K562 (cell line): ENCODE measurements at regions of chr16 and their contacts with region 1.

Region 1: GRCh38 chr16:48353565-48354163 is 31.5 kb downstream of the SIAH1 start:
- DNase-seq: peak; percentile 74 to 83 (median 78)
- ATAC-seq: peak; percentile 94
- H3K4me3 ChIP-seq: no peak overlapping the region
- H3K27ac ChIP-seq: no peak overlapping the region
- H3K4me1 ChIP-seq: no peaks in the 10 kb centered on the region; a peak in 1 of 5 replicates
- H3K27me3 ChIP-seq: no peaks in the 10 kb centered on the region
- CTCF ChIP-seq: peak; percentile 94 to 99 (median 99)
- EP300 ChIP-seq: no peak
- POLR2A ChIP-seq: no peak
- RAD21 ChIP-seq: peak; percentile 81 to 88

Region 2: DNA sequence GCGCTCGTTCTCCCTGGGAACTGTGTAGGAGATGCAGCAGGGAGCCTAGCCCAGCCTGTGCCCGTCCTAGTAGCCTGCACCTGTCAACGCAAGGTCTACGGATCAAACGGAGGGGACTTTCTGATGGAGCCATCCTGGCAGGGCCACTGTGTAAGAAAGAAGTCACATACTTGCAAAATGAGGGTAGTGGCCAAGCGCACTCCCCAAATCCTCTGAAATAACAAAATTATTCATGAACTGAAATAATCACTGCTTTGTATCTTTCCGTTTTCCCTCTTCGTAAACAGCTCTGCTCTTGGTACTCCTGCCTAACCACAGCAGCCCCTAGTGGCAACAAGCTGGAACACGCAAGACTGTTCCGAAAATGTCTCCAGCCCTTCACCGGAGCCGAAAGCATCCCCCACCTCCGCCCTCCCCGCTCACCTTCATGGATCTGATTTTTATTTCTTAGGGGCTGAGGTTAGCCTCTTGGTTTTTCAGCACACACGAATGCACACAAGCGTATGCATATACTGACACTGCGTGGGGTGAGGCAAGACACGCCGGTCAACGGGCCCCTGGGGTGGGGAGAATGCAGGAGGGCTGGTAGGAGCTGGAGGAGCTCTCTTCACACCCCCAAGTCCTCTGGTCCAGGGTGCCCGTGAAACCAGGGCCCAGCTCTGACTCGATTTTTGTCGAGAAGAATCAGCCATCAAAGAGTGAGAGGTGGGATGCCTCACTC is 298.6 kb before region 1 on chr16:
- CTCF ChIA-PET with region 1: no interaction called
- POLR2A ChIA-PET with region 1: no interaction called
- in situ Hi-C with region 1: no loop called
- intact Hi-C with region 1: no loop called
- DNase-seq: peak; percentile 25 to 46 (median 40)
- ATAC-seq: peak; percentile 93
- H3K4me3 ChIP-seq: no peak overlapping the region
- H3K27ac ChIP-seq: no peak overlapping the region
- H3K4me1 ChIP-seq: no peaks in the 10 kb centered on the region; a peak in 1 of 5 replicates
- H3K27me3 ChIP-seq: peaks cover 7 to 17% of the 10 kb centered on the region in 2 experiments; a peak in 3 of 5 replicates
- CTCF ChIP-seq: peak; percentile 59 to 88 (median 74)
- EP300 ChIP-seq: no peak
- POLR2A ChIP-seq: no peak
- RAD21 ChIP-seq: peak; percentile 35 to 59

Region 3: DNA sequence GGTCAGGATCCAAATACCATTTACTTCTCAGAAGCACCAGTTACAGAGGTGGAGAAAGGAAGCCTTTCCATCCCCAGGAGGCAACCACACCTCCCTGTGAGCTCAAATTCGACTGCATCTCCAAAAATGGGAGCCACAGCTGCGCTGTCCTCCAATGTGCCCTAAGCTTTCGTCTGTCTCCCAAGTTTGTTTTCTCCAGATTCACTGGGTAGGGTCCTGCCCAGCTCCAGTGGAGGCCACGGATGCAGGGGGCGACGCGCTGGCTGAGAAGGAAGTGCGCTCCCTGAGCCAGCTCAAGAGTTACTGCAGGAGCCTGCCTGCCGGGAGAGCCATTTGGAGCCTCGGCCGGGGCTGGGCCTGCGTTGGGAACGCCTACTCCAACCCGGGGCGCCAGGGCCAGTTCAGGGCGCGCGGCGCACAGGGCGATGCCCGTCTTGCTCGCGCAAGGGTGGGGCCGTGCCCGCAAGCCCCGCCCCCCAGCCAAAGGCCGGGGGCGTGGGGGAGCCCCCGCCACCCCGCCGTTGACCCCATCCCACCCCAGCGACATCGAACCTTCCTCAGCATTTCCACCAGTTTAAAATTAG is 12.0 kb after region 1 on chr16:
- CTCF ChIA-PET with region 1: no interaction called
- POLR2A ChIA-PET with region 1: interaction called, 28 read pairs
- in situ Hi-C with region 1: no loop called
- intact Hi-C with region 1: no loop called
- DNase-seq: peak; percentile 86 to 93 (median 89)
- ATAC-seq: peak; percentile 98
- H3K4me3 ChIP-seq: peak overlapping the region; percentile 50
- H3K27ac ChIP-seq: peak overlapping the region; percentile 80
- H3K4me1 ChIP-seq: peaks cover 16 to 31% of the 10 kb centered on the region in 2 experiments
- H3K27me3 ChIP-seq: no peaks in the 10 kb centered on the region
- CTCF ChIP-seq: peak; percentile 14 to 27 (median 20); a peak in 2 of 6 replicates
- EP300 ChIP-seq: no peak
- POLR2A ChIP-seq: peak; percentile 80
- RAD21 ChIP-seq: no peak

Region 4: DNA sequence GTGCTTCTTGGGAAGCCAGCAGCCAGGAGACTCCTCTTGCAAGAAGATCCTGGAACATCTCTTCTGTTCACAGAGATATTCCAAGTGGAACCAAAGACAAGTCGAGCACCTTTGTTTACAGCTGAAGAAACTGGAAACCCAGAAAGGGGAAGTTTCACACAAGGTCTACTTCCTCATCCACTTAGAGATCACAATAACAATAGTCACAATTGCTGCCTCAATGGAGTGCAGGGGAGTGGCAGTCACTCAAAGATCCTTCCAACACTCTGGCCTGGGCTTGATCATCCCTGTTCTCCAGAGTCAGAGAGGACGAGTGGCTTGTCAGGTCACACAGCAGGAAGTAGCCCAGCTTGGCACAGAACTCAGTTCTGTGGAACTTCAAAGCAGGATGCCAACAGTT is 78.5 kb after region 1 on chr16:
- CTCF ChIA-PET with region 1: interaction called, 14 read pairs
- POLR2A ChIA-PET with region 1: no interaction called
- in situ Hi-C with region 1: no loop called
- intact Hi-C with region 1: loop called (anchors 5 kb)
- DNase-seq: no peak
- ATAC-seq: no peak; the same call in 2 of the 3 replicates
- H3K4me3 ChIP-seq: no peak overlapping the region
- H3K27ac ChIP-seq: no peak overlapping the region
- H3K4me1 ChIP-seq: no peaks in the 10 kb centered on the region
- H3K27me3 ChIP-seq: peaks cover 10 to 27% of the 10 kb centered on the region in 2 experiments; a peak in 4 of 5 replicates
- CTCF ChIP-seq: no peak
- EP300 ChIP-seq: no peak
- POLR2A ChIP-seq: no peak
- RAD21 ChIP-seq: no peak

Region 5: DNA sequence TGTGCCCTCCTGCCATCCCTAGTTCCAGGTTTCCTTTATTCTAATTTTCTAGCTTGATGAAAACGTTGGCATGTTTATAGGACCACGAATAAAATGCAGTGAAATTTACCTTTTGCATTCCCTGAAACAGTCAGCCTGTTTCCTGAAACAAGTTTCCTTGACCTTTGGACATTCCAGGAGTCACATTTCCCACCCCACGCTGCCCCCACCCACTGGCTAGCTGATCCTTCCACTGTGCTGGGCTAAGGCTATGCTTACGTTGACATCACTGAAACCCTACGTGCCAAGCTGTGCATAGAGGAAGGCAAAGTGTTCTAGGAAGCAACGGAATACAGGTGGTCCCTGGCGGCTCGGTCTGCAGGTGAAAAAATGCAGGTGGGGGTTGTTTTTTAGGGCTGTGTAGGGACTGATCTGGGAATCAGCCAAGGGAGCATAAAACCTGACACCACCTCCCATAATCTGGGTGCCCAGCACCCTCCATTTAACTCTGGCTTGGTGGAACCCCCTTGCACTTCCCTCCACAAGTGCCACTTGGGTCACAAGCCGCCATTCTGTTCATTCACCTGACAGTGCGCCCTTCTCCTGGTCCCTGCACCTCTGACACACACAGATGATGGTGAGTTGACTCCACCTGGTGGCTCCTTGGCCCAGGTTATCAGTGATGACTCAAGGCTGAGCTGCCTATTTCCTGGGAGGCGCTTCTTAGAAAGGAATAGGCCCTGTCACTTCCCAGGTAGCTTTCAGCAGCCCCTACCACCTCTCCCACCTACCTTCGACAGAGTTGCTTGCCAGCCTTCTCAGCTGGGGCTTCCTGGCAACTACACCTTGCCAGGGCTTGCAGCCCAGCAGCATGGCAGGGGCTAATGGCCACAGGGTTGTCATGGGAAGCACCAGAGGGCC is 172.6 kb after region 1 on chr16:
- CTCF ChIA-PET with region 1: interaction called, 3 read pairs
- POLR2A ChIA-PET with region 1: no interaction called
- in situ Hi-C with region 1: loop called (anchors 5 kb)
- intact Hi-C with region 1: loop called (anchors 1 kb)
- DNase-seq: peak in 2 of 4 experiments; percentile 28 to 34
- ATAC-seq: peak; percentile 80
- H3K4me3 ChIP-seq: no peak overlapping the region
- H3K27ac ChIP-seq: no peak overlapping the region
- H3K4me1 ChIP-seq: no peaks in the 10 kb centered on the region
- H3K27me3 ChIP-seq: peaks cover 0 to 30% of the 10 kb centered on the region in 2 experiments; a peak in 2 of 5 replicates
- CTCF ChIP-seq: peak; percentile 35 to 52 (median 48); a peak in 4 of 6 replicates
- EP300 ChIP-seq: no peak
- POLR2A ChIP-seq: no peak
- RAD21 ChIP-seq: peak; percentile 48 to 72

Region 6: GRCh38 chr16:48632137-48632774 is 278.6 kb after region 1 on chr16:
- CTCF ChIA-PET with region 1: interaction called, 6 read pairs
- POLR2A ChIA-PET with region 1: interaction called, 4 read pairs
- in situ Hi-C with region 1: loop called (anchors 5 kb)
- intact Hi-C with region 1: loop called (anchors 1 kb)
- DNase-seq: no peak
- ATAC-seq: no peak; the same call in 2 of the 3 replicates
- H3K4me3 ChIP-seq: no peak overlapping the region
- H3K27ac ChIP-seq: no peak overlapping the region
- H3K4me1 ChIP-seq: no peaks in the 10 kb centered on the region
- H3K27me3 ChIP-seq: peaks cover 8 to 34% of the 10 kb centered on the region in 2 experiments
- CTCF ChIP-seq: no peak
- EP300 ChIP-seq: no peak
- POLR2A ChIP-seq: no peak
- RAD21 ChIP-seq: no peak